IMR-90 (cell line): ENCODE measurements at regions of chr13 and their contacts with region 1.

Region 1: GRCh38 chr13:104701591-104701990 is 1635.4 kb upstream of the SLC10A2 start:
- DNase-seq: no peak
- ATAC-seq: no peak
- H3K4me3 ChIP-seq: no peak overlapping the region
- H3K27ac ChIP-seq: no peak overlapping the region
- H3K4me1 ChIP-seq: no peaks in the 10 kb centered on the region
- H3K27me3 ChIP-seq: no peaks in the 10 kb centered on the region
- CTCF ChIP-seq: no peak
- POLR2A ChIP-seq: no peak
- RAD21 ChIP-seq: no peak

Region 2: GRCh38 chr13:104385404-104385803 is 316.2 kb before region 1 on chr13:
- CTCF ChIA-PET with region 1: no interaction called
- POLR2A ChIA-PET with region 1: no interaction called
- dilution Hi-C with region 1: no loop called
- in situ Hi-C with region 1: no loop called
- intact Hi-C with region 1: no loop called
- DNase-seq: peak; percentile 56
- ATAC-seq: peak; percentile 80
- H3K4me3 ChIP-seq: no peak overlapping the region
- H3K27ac ChIP-seq: no peak overlapping the region
- H3K4me1 ChIP-seq: no peaks in the 10 kb centered on the region
- H3K27me3 ChIP-seq: no peaks in the 10 kb centered on the region
- CTCF ChIP-seq: no peak
- POLR2A ChIP-seq: no peak
- RAD21 ChIP-seq: no peak

Region 3: GRCh38 chr13:106314417-106314816 is 1612.8 kb after region 1 on chr13:
- CTCF ChIA-PET with region 1: no interaction called
- POLR2A ChIA-PET with region 1: no interaction called
- dilution Hi-C with region 1: no loop called
- in situ Hi-C with region 1: no loop called
- intact Hi-C with region 1: loop called (anchors 5 kb)
- DNase-seq: no peak
- ATAC-seq: no peak
- H3K4me3 ChIP-seq: no peak overlapping the region
- H3K27ac ChIP-seq: no peak overlapping the region
- H3K4me1 ChIP-seq: no peaks in the 10 kb centered on the region
- H3K27me3 ChIP-seq: no peaks in the 10 kb centered on the region
- CTCF ChIP-seq: no peak
- POLR2A ChIP-seq: no peak
- RAD21 ChIP-seq: no peak